A549 (cell line): ENCODE measurements at regions of chr19 and their contacts with region 1.

Region 1: GRCh38 chr19:41706741-41707501 is 1.5 kb upstream of the CEACAM5 start:
- DNase-seq: peak; percentile 91 to 99
- ATAC-seq: peak; percentile 79 to 94
- H3K4me3 ChIP-seq: peak overlapping the region; percentile 39
- H3K27ac ChIP-seq: peak overlapping the region; percentile 65 to 84; a peak in 5 of 6 replicates
- H3K4me1 ChIP-seq: peaks cover 28% of the 10 kb centered on the region
- CTCF ChIP-seq: peak; percentile 100
- EP300 ChIP-seq: no peak
- POLR2A ChIP-seq: no peak
- RAD21 ChIP-seq: peak; percentile 61 to 86

Region 2: DNA sequence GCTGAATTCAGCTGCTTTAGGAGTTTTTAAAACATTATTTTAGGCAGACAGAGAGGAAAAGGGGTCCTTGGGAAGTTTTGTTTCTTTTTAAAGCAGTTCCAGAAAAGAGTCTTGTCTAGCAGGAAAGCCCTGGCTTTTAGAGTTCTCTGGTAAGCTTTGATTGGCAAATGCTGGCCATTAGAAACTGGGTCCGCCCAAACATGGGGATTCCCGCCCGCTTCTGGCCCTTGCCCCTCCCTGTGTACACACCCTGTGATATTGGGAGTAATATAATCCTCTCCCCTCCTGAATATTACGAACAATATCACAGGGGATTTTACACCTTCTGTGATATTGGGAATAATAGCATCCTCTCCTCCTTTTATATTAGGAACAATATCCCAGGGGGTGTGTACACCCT is 205.1 kb before region 1 on chr19:
- CTCF ChIA-PET with region 1: no interaction called
- POLR2A ChIA-PET with region 1: no interaction called
- DNase-seq: peak in 1 of 2 experiments; percentile 53
- ATAC-seq: peak; percentile 36 to 60; a peak in 4 of 6 replicates
- H3K4me3 ChIP-seq: peak overlapping the region; percentile 35
- H3K27ac ChIP-seq: peak overlapping the region; percentile 66 to 82
- H3K4me1 ChIP-seq: peaks cover 15% of the 10 kb centered on the region
- CTCF ChIP-seq: no peak
- EP300 ChIP-seq: no peak
- POLR2A ChIP-seq: no peak
- RAD21 ChIP-seq: no peak

Region 3: DNA sequence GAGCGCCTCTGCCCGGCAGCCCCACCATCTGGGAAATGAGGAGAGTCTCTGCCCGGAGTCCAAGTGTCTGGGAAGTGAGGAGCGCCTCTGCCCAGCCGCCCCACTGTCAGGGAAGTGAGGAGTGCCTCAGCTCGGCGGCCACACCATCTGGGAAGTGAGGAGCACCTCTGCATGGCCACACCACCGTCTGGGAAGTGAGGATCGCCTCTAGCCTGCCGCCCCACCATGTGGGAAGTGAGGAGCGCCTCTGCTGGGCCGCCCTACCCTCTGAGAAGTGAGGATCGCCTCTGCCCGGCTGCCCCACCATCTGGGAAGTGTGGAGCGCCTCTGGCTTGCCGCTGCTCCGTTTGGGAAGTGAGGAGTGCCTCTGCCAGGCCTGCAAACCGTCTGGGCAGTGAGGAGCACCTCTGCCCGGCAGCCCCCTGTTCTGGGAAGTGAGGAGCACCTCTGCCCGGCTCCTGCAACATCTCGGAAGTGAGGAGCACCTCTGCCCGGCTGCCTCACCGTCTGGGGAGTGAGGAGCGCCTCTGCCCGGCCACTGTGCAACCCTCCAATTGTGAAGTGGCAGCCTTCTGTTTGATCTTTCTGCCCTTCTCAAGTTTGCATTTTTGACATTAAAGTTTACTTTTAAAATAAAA is 191.8 kb before region 1 on chr19:
- CTCF ChIA-PET with region 1: no interaction called
- POLR2A ChIA-PET with region 1: no interaction called
- DNase-seq: no peak
- ATAC-seq: peak; percentile 21 to 61; a peak in 4 of 6 replicates
- H3K4me3 ChIP-seq: no peak overlapping the region
- H3K27ac ChIP-seq: no peak overlapping the region
- H3K4me1 ChIP-seq: no peaks in the 10 kb centered on the region
- CTCF ChIP-seq: no peak
- EP300 ChIP-seq: no peak
- POLR2A ChIP-seq: no peak
- RAD21 ChIP-seq: no peak

Region 4: DNA sequence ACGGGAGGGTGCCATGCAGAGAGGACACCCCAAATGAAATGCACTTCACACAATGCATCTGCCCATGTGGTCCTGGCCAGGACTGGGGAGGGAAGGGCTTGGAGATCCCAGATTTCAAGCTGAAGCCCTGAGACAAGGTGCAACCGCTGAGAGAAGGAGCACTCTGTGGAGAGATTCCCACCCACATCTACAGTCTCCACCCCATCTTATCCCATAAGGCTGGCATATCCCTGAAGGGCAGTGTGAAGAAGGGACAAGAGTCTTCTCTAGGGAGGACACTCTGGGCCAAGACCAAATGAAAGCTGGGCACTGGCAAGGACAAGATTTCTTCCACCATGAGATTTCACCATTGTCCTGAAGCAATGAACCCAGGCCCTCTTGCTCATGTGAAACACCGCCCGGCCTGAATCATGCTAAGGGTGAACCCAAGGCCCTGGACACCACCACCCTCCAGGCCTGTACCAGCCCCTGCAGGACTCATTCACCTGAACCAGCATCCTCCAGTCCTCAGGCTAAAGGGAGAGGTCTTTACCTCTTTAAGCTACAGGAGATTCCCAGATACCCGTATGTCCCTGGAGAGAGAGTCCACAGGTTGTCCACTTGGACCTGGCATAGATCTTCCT is 100.6 kb before region 1 on chr19:
- CTCF ChIA-PET with region 1: interaction called, 11 read pairs
- POLR2A ChIA-PET with region 1: no interaction called
- DNase-seq: no peak
- ATAC-seq: no peak; a peak in 1 of 6 replicates
- H3K4me3 ChIP-seq: no peak overlapping the region
- H3K27ac ChIP-seq: no peak overlapping the region
- H3K4me1 ChIP-seq: no peaks in the 10 kb centered on the region
- CTCF ChIP-seq: no peak
- EP300 ChIP-seq: no peak
- POLR2A ChIP-seq: no peak
- RAD21 ChIP-seq: no peak

Region 5: GRCh38 chr19:41682386-41682785 is 24.5 kb before region 1 on chr19:
- CTCF ChIA-PET with region 1: interaction called, 358 read pairs
- POLR2A ChIA-PET with region 1: interaction called, 3 read pairs
- DNase-seq: no peak
- ATAC-seq: peak in 1 of 2 experiments; percentile 31; a peak in 2 of 6 replicates
- H3K4me3 ChIP-seq: no peak overlapping the region
- H3K27ac ChIP-seq: no peak overlapping the region
- H3K4me1 ChIP-seq: no peaks in the 10 kb centered on the region
- CTCF ChIP-seq: no peak
- EP300 ChIP-seq: no peak
- POLR2A ChIP-seq: no peak
- RAD21 ChIP-seq: no peak

Region 6: DNA sequence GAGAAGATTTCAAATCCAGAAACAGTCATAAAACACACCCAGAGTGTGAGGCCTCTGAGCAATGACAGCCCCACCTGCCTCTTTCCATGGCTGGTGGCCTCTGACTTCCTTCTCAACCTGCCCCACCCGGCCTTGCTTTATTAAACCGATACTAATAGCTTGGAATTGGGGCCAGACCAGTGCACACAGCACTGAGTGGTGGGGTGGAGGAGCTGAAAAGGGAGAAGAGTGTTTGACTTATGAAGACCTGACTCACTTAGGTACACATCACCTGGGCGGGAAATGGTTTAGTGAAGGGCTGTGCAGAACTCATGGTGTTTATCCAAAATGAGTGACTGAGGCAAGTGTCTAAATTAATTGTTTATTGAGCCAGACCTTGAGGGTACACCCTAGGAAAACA is 27.7 kb after region 1 on chr19:
- CTCF ChIA-PET with region 1: interaction called, 95 read pairs
- POLR2A ChIA-PET with region 1: no interaction called
- DNase-seq: no peak
- ATAC-seq: peak in 1 of 2 experiments; percentile 26; a peak in 2 of 6 replicates
- H3K4me3 ChIP-seq: no peak overlapping the region
- H3K27ac ChIP-seq: no peak overlapping the region
- H3K4me1 ChIP-seq: no peaks in the 10 kb centered on the region
- CTCF ChIP-seq: no peak
- EP300 ChIP-seq: no peak
- POLR2A ChIP-seq: no peak
- RAD21 ChIP-seq: no peak

Region 7: DNA sequence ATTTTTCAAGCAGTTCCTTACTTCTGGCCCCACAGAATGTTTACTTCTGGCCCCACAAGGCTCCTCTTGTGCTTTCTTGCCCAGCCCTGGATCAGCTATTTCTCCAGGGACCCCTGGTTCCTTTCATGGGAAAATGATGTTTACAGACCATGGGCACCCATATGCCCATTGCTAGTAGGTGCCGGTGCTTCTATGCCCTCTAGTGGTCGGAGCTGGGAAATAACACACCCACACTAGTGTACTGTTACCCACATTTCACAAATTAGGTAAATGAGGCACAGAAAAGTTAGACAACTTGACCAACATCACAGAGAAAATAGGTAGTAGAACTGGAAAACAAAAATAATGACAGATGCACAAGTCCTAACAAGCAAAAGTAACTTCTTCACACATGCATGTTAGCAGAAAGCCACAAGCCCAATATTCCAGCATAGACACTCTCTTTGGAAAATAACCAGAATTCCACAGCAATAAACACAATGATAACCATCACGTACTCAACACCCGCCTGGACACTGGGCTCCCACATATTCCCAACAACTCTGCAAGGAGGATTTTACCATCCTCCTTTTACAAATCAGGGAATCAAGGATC is 47.1 kb after region 1 on chr19:
- CTCF ChIA-PET with region 1: interaction called, 128 read pairs
- POLR2A ChIA-PET with region 1: no interaction called
- DNase-seq: peak; percentile 47 to 69
- ATAC-seq: peak; percentile 61 to 91; a peak in 5 of 6 replicates
- H3K4me3 ChIP-seq: no peak overlapping the region
- H3K27ac ChIP-seq: no peak overlapping the region
- H3K4me1 ChIP-seq: no peaks in the 10 kb centered on the region
- CTCF ChIP-seq: peak; percentile 87
- EP300 ChIP-seq: no peak
- POLR2A ChIP-seq: no peak
- RAD21 ChIP-seq: peak; percentile 45 to 66

Region 8: DNA sequence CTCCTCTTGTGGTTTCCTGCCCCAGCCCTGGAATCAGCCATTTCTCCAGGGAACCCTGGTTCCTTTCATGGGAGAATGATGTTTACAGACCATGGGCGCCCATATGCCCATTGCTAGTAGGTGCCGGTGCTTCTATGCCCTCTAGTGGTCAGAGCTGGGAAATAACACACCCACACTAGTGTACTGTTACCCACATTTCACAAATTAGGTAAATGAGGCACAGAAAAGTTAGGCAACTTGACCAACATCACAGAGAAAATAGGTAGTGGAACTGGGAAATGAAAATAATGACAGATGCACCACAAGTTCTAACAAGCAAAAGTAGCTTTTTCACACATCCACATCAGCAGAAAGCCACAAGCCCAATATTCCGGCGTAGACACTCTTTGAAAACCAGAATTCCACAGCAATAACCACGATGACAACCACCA is 88.1 kb after region 1 on chr19:
- CTCF ChIA-PET with region 1: interaction called, 28 read pairs
- POLR2A ChIA-PET with region 1: no interaction called
- DNase-seq: peak; percentile 49 to 70
- ATAC-seq: peak; percentile 61 to 89
- H3K4me3 ChIP-seq: no peak overlapping the region
- H3K27ac ChIP-seq: no peak overlapping the region
- H3K4me1 ChIP-seq: 0 out of 3 replicates have a peak, but pooled peaks cover 11% of the 10 kb centered on the region
- CTCF ChIP-seq: peak; percentile 96
- EP300 ChIP-seq: no peak
- POLR2A ChIP-seq: no peak
- RAD21 ChIP-seq: peak; percentile 32 to 47; a peak in 4 of 5 replicates

Region 9: DNA sequence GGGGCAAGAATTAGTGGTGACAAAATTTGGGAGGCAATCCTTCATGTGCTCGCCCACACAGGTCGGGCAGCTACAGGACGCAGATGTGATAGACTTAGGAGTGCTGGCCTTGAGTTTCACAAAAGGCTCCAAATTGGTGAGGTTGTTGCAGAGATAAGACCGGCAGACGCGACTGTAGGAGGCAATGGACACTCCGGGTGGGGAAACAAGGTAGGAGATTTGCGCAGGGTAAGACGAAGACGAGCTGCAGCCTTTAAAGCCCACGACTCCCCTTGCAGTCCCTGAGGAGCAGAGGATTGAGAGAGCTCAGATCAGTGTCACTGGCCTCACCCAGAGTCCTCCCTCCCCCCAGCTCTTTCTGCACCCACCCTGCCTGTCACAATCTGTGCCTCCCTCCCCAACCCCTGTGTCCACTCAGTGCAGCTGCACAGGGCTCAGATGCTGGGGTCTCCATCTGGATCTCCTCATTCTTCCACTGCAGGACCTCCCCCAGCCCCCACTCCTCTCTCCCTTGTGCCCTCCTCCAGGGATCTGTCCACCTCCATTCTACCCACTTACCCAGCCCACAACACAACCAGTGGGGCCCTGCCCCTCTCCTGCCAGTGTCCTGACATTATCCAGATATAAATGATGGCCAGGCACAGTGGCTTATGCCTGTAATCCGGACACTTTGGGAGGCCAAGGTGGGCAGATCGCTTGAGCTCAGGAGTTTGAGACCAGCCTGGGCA is 131.2 kb after region 1 on chr19:
- CTCF ChIA-PET with region 1: interaction called, 13 read pairs
- POLR2A ChIA-PET with region 1: no interaction called
- DNase-seq: no peak
- ATAC-seq: peak; percentile 7 to 20; a peak in 4 of 6 replicates
- H3K4me3 ChIP-seq: no peak overlapping the region
- H3K27ac ChIP-seq: no peak overlapping the region
- H3K4me1 ChIP-seq: no peaks in the 10 kb centered on the region
- CTCF ChIP-seq: no peak
- EP300 ChIP-seq: no peak
- POLR2A ChIP-seq: no peak
- RAD21 ChIP-seq: no peak